HCT116 (cell line): ENCODE measurements at regions of chr2 and their contacts with region 1.

Region 1: DNA sequence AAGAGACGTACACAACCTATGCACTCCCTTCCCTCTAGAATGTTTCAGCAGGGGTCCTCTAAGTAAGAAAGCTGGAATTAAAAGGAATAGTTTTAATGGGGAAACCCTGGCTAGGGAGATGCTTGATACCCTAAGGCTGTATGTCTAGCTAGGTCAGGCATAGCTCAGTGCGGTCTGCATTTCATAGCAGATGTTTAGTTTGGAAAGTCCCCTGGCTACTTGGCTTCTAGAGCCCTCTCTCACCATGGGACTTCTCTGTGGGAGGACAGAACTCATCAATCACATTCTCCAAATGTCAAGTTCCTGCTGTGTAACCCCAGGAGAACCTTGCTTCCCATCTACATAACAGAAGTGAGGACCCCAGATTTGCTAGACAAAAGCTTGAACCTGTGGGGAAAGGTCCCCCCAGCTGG is 24.1 kb upstream of the ANXA4 start:
- DNase-seq: no peak
- ATAC-seq: no peak
- H3K4me3 ChIP-seq: no peak overlapping the region
- H3K27ac ChIP-seq: no peak overlapping the region
- H3K4me1 ChIP-seq: peaks cover 0 to 4% of the 10 kb centered on the region in 2 experiments; a peak in 1 of 4 replicates
- H3K27me3 ChIP-seq: no peaks in the 10 kb centered on the region
- CTCF ChIP-seq: no peak
- POLR2A ChIP-seq: no peak
- RAD21 ChIP-seq: no peak

Region 2: DNA sequence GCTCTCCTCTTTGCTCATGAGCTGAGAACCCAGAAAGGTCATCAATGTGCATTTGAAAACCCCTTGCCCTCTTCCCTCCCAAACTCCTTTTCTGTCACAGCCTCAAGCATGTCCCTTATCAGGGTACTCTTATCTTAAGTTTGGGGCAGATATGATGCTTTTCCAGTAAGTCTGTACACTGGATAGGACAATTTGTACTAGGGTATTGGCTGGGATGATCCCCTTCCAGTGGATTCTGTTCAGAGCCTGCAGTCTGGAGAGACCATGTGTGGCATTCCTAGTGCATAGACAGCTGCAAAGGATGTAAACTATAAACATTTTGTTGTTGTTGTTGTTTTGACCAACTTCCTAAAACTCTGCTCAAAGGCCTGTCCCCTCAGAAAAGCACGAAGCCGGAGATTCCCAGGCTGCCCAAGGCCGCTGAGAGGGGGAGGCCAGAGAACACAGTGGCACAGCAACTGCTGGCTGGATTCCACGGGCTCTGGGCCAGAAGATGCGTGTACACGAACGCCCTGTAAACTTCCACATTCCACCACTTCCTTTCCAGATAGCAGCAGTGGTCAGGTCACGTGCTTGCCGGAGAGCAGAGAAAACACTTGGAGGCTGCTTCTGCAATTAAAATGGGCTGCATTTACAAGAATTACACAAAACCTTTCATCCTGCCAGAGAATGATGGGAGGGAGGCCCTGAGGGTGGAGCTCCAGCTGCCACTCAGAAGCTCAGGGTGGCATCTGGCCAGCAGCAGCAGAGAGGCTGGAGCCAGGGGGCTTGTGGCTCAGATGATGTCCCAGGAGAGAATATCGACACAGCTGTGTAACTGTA is 888.8 kb before region 1 on chr2:
- CTCF ChIA-PET with region 1: no interaction called
- POLR2A ChIA-PET with region 1: no interaction called
- RAD21 ChIA-PET with region 1: no interaction called
- intact Hi-C with region 1: no loop called
- DNase-seq: peak; percentile 6
- ATAC-seq: peak; percentile 76
- H3K4me3 ChIP-seq: no peak overlapping the region
- H3K27ac ChIP-seq: no peak overlapping the region
- H3K4me1 ChIP-seq: peaks cover 6 to 19% of the 10 kb centered on the region in 2 experiments; a peak in 2 of 4 replicates
- H3K27me3 ChIP-seq: no peaks in the 10 kb centered on the region
- CTCF ChIP-seq: no peak
- POLR2A ChIP-seq: no peak
- RAD21 ChIP-seq: no peak

Region 3: GRCh38 chr2:69026026-69026425 is 691.8 kb before region 1 on chr2:
- CTCF ChIA-PET with region 1: no interaction called
- POLR2A ChIA-PET with region 1: no interaction called
- RAD21 ChIA-PET with region 1: no interaction called
- intact Hi-C with region 1: loop called (anchors 1 kb)
- DNase-seq: peak; percentile 36
- ATAC-seq: peak; percentile 91
- H3K4me3 ChIP-seq: no peak overlapping the region
- H3K27ac ChIP-seq: no peak overlapping the region
- H3K4me1 ChIP-seq: peaks cover 0 to 6% of the 10 kb centered on the region in 2 experiments; a peak in 1 of 4 replicates
- H3K27me3 ChIP-seq: no peaks in the 10 kb centered on the region
- CTCF ChIP-seq: peak; percentile 57 to 83 (median 74); a peak in 5 of 6 replicates
- POLR2A ChIP-seq: no peak
- RAD21 ChIP-seq: peak; percentile 84

Region 4: GRCh38 chr2:69386789-69387734 is 330.8 kb before region 1 on chr2 and contains the start of gene GFPT1:
- CTCF ChIA-PET with region 1: no interaction called
- POLR2A ChIA-PET with region 1: no interaction called
- RAD21 ChIA-PET with region 1: no interaction called
- intact Hi-C with region 1: loop called (anchors 10 kb)
- DNase-seq: peak; percentile 65
- ATAC-seq: peak; percentile 97
- H3K4me3 ChIP-seq: peak within 1 kb of the TSS; percentile 70 to 76
- H3K27ac ChIP-seq: peak within 1 kb of the TSS; percentile 37; the same call in 1 of the 2 replicates
- H3K4me1 ChIP-seq: peaks cover 8 to 15% of the 10 kb centered on the region in 2 experiments; a peak in 3 of 4 replicates
- H3K27me3 ChIP-seq: no peaks in the 10 kb centered on the region
- CTCF ChIP-seq: no peak
- POLR2A ChIP-seq: peak; percentile 77
- RAD21 ChIP-seq: no peak
- total RNA-seq, gene GFPT1: 62.4 TPM

Region 5: DNA sequence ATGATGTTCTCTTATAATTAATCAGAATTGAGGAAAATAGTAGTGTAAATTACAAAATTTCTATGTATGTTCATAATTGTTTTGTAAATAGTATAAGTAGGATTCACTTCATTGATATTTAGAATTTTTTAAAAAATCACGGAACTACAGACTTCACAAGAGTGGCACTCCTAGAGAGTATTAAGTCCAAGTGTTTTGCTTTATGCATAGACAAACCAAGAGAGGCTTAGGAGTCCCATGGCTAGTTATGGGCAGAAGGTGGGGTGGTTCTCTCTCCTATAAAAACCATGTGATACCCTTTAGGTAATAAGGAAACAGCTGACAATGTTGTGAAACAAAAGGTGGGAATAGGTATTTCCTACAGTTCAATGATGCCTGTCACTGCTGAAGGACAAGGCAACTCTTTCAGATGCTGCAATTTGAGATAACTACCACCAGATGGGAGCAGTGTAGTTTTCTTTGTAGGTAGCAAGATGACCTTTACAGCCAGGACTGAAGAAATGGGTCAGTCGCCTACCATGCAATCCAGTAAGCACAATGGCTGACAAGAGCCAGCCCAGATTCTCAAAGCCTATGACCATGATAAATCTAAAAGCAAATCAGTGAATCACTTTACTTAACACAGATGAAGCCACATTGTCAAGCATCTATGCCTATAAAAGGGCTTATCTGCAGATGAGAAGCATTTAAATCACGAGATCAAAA is 158.3 kb before region 1 on chr2:
- CTCF ChIA-PET with region 1: interaction called, 8 read pairs
- POLR2A ChIA-PET with region 1: no interaction called
- RAD21 ChIA-PET with region 1: interaction called in 1 of 2 experiments, 3 read pairs
- intact Hi-C with region 1: loop called (anchors 1 kb)
- DNase-seq: peak; percentile 66
- ATAC-seq: peak; percentile 96
- H3K4me3 ChIP-seq: no peak overlapping the region
- H3K27ac ChIP-seq: no peak overlapping the region
- H3K4me1 ChIP-seq: peaks cover 0 to 4% of the 10 kb centered on the region in 2 experiments; a peak in 1 of 4 replicates
- H3K27me3 ChIP-seq: no peaks in the 10 kb centered on the region
- CTCF ChIP-seq: peak; percentile 68 to 88 (median 82)
- POLR2A ChIP-seq: no peak
- RAD21 ChIP-seq: peak; percentile 96